Tibial artery (tissue), 4 donors: ENCODE measurements at regions of chr5 and their contacts with region 1.

Region 1: GRCh38 chr5:179060116-179061008 is at the start of gene ZNF354C:
- DNase-seq: peak; percentile 87 to 92
- H3K4me3 ChIP-seq: peak within 1 kb of the TSS; percentile 82 to 84
- H3K27ac ChIP-seq: peak within 1 kb of the TSS; percentile 80 to 81
- H3K4me1 ChIP-seq: peaks cover 7 to 14% (median 11%) of the 10 kb centered on the region in 4 donors
- H3K27me3 ChIP-seq: no peaks in the 10 kb centered on the region
- CTCF ChIP-seq: no peak

Region 2: GRCh38 chr5:178902841-178903240 is 157.5 kb before region 1 on chr5:
- intact Hi-C with region 1: no loop called
- DNase-seq: no peak
- H3K4me3 ChIP-seq: no peak overlapping the region
- H3K27ac ChIP-seq: no peak overlapping the region
- H3K4me1 ChIP-seq: no peaks in the 10 kb centered on the region
- H3K27me3 ChIP-seq: no peaks in the 10 kb centered on the region
- CTCF ChIP-seq: no peak

Region 3: DNA sequence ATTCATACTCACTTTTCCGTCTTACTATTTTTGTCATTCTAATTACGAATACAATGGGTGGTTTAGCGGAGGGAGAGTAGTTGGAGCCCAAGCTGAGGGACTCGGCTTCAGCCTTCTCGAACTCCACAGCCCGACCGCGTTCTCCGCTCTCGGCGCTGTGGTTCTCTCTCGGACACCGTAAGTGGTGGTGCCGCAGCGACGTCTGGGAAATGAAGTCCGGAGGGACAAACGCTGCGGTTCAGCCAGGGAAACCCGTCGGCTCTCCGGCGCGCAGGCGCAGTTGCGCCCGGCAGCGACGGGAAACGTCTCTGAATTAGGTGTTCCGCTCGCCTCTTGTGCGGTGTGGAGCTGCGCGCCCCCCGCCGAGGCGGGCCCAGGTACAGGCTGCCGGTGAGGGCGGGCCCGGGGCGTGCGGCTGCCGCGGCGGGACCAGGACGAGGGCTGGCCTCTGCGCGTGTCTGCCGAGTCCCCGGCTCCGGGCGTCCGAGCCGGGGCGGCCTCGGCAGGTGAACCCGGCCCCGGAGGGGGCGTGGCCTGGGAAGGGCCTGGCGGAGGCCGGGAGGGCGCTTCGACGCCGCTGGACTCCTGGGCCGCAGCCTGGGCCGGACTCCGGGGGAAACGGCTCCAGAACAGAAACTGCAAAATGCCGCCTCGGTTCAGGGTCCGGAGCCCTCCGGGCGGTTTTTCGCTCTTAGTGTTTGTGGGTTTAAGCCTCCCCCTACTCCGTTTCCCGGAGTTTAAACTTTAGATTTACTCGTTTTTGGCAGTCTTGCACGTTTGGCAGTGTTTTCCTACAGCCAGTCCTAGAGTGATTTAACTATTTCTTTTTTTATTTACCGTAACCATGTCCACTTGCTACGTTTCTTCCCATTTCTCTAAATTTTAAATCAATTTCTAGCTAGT is 36.6 kb before region 1 on chr5 and contains the start of gene ZNF879:
- intact Hi-C with region 1: loop called (anchors 2 kb)
- DNase-seq: peak; percentile 93 to 95
- H3K4me3 ChIP-seq: peak within 1 kb of the TSS; percentile 61 to 79
- H3K27ac ChIP-seq: peak within 1 kb of the TSS; percentile 69 to 84
- H3K4me1 ChIP-seq: peaks cover 0 to 8% (median 3%) of the 10 kb centered on the region in 4 donors
- H3K27me3 ChIP-seq: no peaks in the 10 kb centered on the region
- CTCF ChIP-seq: no peak